ENCODE measurements at regions of chr16 and their contacts with region 1.

Region 1: GRCh38 chr16:352547-353403 is at the start of gene AXIN1:
- DNase-seq: peak; percentile 85 to 96 (median 90)
- H3K4me3 ChIP-seq: peak within 1 kb of the TSS; percentile 50 to 84 (median 71)
- H3K27ac ChIP-seq: peak within 1 kb of the TSS in 54 of 59 donors; percentile 33 to 88 (median 73)
- H3K27me3 ChIP-seq: no peaks in the 10 kb centered on the region
- CTCF ChIP-seq: peak in 42 of 56 donors; percentile 6 to 64 (median 32)
- total RNA-seq, gene AXIN1: 13.3 to 34.4 (median 19.8) TPM

Region 2: GRCh38 chr16:117379-118365 is 235.1 kb before region 1 on chr16:
- intact Hi-C with region 1: loop called in 1 of 2 experiments (anchors 5 kb)
- DNase-seq: peak in 2 of 10 donors; percentile 51 to 52
- H3K4me3 ChIP-seq: no peak overlapping the region
- H3K27ac ChIP-seq: no peak overlapping the region
- H3K27me3 ChIP-seq: no peaks in the 10 kb centered on the region
- CTCF ChIP-seq: peak in 55 of 56 donors; percentile 20 to 67 (median 58)

Region 3: GRCh38 chr16:228818-229730 is 123.7 kb before region 1 on chr16 and contains the start of gene LUC7L:
- intact Hi-C with region 1: loop called (anchors 2 to 5 kb)
- DNase-seq: peak; percentile 86 to 94 (median 90)
- H3K4me3 ChIP-seq: peak within 1 kb of the TSS; percentile 70 to 100 (median 89)
- H3K27ac ChIP-seq: peak within 1 kb of the TSS; percentile 84 to 99 (median 97)
- H3K27me3 ChIP-seq: no peaks in the 10 kb centered on the region
- CTCF ChIP-seq: peak in 28 of 56 donors; percentile 9 to 49 (median 25)
- total RNA-seq, gene LUC7L: 88.8 to 191 (median 130) TPM

Region 4: GRCh38 chr16:234468-235305 is 118.1 kb before region 1 on chr16 and contains the start of gene FAM234A:
- intact Hi-C with region 1: loop called (anchors 2 to 5 kb)
- DNase-seq: peak; percentile 80 to 96 (median 92)
- H3K4me3 ChIP-seq: peak within 1 kb of the TSS; percentile 64 to 97 (median 90)
- H3K27ac ChIP-seq: peak within 1 kb of the TSS in 58 of 59 donors; percentile 78 to 98 (median 92)
- H3K27me3 ChIP-seq: no peaks in the 10 kb centered on the region
- CTCF ChIP-seq: peak in 44 of 56 donors; percentile 5 to 62 (median 39)
- total RNA-seq, gene FAM234A: 26.6 to 97.4 (median 44.0) TPM